GM10248 (cell line): ENCODE measurements at regions of chr6 and their contacts with region 1.

Region 1: DNA sequence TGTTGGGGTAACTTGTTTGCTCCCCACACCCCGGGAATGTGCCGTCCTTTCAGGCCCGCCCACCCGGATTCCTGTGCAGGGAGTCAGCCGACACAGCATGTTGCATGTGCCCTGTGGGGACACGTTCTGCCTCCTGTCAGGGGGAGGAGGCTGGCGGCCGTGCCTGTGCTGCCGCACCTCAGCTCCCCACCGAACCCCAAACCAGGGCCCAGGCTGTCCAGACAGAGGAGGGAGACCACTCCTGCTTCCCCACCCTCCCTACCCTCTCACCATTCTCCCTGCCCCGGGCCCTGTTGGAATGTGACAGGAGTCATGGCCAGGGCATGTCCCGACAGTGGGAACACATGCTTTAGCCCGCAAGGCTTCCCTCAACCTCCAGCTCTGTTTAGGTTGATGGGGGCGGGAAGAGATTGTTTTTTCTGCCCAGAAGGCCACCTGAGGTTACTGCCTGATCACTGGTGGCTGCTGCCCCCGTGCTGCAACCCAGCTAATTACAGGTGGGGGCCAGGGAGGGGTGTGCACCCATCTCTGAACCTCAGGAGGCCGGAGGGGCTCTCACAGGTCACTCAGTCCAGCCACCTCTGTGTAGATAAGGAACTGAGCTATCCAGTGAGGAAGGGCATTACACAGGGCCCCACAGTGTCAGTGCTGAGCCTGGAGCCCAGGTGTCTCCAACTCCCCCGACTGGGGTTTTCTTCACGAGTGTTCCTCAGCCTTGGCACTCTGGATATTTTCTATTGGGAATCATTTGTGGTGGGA is 13.6 kb downstream of the LRRC73 start:
- DNase-seq: no peak
- CTCF ChIP-seq: peak; percentile 63

Region 2: GRCh38 chr6:43454696-43455530 is 41.6 kb before region 1 on chr6:
- CTCF ChIA-PET with region 1: interaction called, 18 read pairs
- POLR2A ChIA-PET with region 1: no interaction called
- DNase-seq: peak; percentile 67
- CTCF ChIP-seq: no peak

Region 3: GRCh38 chr6:43477235-43478007 is 19.1 kb before region 1 on chr6 and contains the start of gene TJAP1:
- CTCF ChIA-PET with region 1: interaction called, 42 read pairs
- POLR2A ChIA-PET with region 1: interaction called, 3 read pairs
- DNase-seq: peak; percentile 96
- CTCF ChIP-seq: no peak